ENCODE measurements at regions of chr16 and their contacts with region 1.

Region 1: GRCh38 chr16:9258423-9259051 is 167.1 kb downstream of the HAPSTR1 start:
- DNase-seq: peak; percentile 60
- CTCF ChIP-seq: peak; percentile 57

Region 2: GRCh38 chr16:9238346-9238745 is 20.2 kb before region 1 on chr16:
- CTCF ChIA-PET with region 1: interaction called, 12 read pairs
- POLR2A ChIA-PET with region 1: no interaction called
- DNase-seq: no peak
- CTCF ChIP-seq: no peak

Region 3: GRCh38 chr16:9270424-9270823 is 11.9 kb after region 1 on chr16:
- CTCF ChIA-PET with region 1: interaction called, 16 read pairs
- POLR2A ChIA-PET with region 1: no interaction called
- DNase-seq: no peak
- CTCF ChIP-seq: no peak

Measured in GM10248 (cell line).